Naive thymus-derived CD8-positive, alpha-beta T cell (primary cell): ENCODE measurements at regions of chr14 and their contacts with region 1.

Region 1: DNA sequence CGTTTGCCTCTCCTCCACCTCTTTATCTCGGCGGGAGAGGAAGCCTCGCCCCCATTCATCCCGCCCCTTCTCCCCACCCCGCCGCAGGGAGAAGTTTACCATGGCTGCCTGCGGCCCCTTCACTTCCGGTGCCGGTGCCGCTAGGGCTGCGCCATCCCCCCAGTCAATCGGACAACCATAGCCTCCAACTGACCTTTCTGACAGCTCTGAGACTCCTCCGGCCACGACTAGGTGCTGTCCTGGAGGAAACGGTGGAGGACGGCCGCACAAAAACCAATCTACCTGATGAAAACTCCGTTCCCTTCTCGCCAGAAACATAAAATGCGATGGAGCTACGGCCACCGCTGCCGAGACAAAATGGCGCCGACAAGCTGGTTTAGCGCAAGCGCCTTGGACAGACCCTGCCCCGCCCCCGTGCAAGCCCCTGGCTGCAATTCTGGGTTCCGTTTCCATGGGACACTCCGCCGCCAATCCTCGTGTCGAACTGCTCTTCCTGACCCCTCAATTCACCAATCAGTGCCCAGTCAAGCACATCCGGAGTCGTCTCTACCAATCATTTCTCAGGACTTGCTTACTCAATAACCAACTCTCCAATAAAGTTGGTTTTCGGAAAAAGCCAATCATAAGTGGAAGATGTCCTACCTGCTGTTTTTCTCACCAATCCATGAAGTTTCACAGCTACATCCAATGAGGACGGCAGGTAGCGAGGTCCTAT is 436 bp upstream of the ARID4A start:
- DNase-seq: peak; percentile 96 to 100 (median 99)
- ATAC-seq: peak; percentile 83 to 86
- H3K4me3 Mint-ChIP-seq: no peak overlapping the region
- H3K27ac Mint-ChIP-seq: no peak overlapping the region
- H3K4me1 Mint-ChIP-seq: peaks cover 10 to 64% (median 45%) of the 10 kb centered on the region in 4 donors
- H3K27me3 Mint-ChIP-seq: no peaks in the 10 kb centered on the region

Region 2: GRCh38 chr14:58199726-58200479 is 98.0 kb before region 1 on chr14 and contains the start of gene ACTR10:
- POLR2A ChIA-PET with region 1: interaction called, 28 read pairs
- DNase-seq: peak; percentile 74 to 95 (median 88)
- ATAC-seq: peak; percentile 85 to 88
- H3K4me3 Mint-ChIP-seq: peak within 1 kb of the TSS; percentile 93 to 99 (median 96)
- H3K27ac Mint-ChIP-seq: peak within 1 kb of the TSS; percentile 93 to 98 (median 97)
- H3K4me1 Mint-ChIP-seq: peaks cover 13 to 47% (median 32%) of the 10 kb centered on the region in 4 donors
- H3K27me3 Mint-ChIP-seq: peaks cover 0 to under 1% (median 0%) of the 10 kb centered on the region in 5 donors
- polyA plus RNA-seq, gene ACTR10: 80.3 to 87.2 (median 84.7) TPM

Region 3: DNA sequence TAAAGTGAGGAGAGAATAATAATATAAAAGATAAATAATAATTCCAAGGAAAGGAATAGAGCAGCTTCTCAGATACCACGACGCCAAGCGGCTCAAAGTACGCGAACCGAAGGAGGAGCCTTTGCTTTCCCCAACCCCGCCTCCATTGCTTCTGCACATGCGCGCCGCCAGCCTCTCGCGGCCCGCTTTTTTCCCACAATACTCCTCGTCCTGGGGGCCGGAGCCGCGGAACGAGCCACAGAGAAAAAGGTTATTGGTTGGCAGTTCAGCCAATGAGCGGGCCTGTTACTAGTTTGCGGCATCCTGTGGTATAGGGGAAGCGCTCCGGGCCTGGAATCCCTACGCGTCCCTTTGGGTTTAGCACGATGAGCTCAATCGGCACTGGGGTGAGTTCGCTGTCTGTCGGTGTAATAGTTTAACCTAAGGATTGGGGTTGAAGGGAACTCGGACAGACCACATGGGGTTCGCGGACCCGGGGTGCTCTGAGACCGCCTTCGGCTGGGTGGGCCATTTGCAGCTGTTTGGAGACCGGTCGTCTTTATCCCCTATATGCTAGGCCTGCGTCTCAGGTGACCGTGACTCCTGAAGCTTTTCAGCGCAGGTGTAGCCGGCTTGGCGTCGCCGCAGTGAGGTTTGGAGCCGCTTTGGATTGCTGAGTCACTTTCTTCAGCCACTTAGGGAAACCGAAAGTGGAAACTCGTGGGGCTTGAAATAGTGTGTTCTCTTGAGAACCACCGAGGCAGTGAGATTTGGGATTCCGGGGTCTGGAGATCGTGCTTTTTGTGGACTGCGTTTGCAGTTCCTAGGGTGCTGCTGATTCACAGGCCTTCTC is 53.1 kb before region 1 on chr14 and contains the start of gene PSMA3:
- POLR2A ChIA-PET with region 1: interaction called, 51 read pairs
- DNase-seq: peak; percentile 93 to 99 (median 98)
- ATAC-seq: peak; percentile 91
- H3K4me3 Mint-ChIP-seq: peak within 1 kb of the TSS; percentile 93 to 100 (median 98)
- H3K27ac Mint-ChIP-seq: peak within 1 kb of the TSS; percentile 97 to 99 (median 98)
- H3K4me1 Mint-ChIP-seq: peaks cover 22 to 52% (median 51%) of the 10 kb centered on the region in 4 donors
- H3K27me3 Mint-ChIP-seq: peaks cover 0 to 1% (median 0%) of the 10 kb centered on the region in 5 donors
- polyA plus RNA-seq, gene PSMA3: 135 to 144 (median 142) TPM

Region 4: DNA sequence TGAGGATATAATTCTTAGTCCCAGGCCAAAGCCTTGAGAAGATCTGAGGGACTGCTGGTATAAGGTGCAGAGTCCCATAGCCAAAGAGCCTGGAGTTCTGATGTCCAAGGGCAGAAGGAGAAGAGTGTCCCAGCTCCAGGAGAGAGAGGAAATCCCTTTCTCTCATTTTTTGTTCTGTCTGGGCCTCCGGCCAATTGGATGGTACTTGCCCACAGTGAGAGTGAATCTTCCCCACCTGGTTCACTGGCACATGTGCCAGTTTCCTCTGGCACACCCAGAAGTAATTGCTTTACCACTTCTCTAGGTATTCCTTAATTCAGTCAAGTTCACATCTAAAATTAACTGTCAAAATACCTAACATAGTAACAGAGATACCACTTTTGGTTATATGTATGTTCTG is 15.8 kb after region 1 on chr14:
- POLR2A ChIA-PET with region 1: interaction called, 15 read pairs
- DNase-seq: no peak
- ATAC-seq: no peak
- H3K4me3 Mint-ChIP-seq: no peak overlapping the region
- H3K27ac Mint-ChIP-seq: peak overlapping the region in 7 of 10 donors; percentile 25 to 71 (median 35)
- H3K4me1 Mint-ChIP-seq: peaks cover 7 to 15% (median 9%) of the 10 kb centered on the region in 4 donors
- H3K27me3 Mint-ChIP-seq: no peaks in the 10 kb centered on the region

Region 5: GRCh38 chr14:58395812-58396788 is 98.2 kb after region 1 on chr14 and contains the start of gene TOMM20L:
- POLR2A ChIA-PET with region 1: interaction called, 16 read pairs
- DNase-seq: peak; percentile 50 to 82 (median 73)
- ATAC-seq: peak; percentile 82 to 88
- H3K4me3 Mint-ChIP-seq: peak within 1 kb of the TSS; percentile 78 to 94 (median 86)
- H3K27ac Mint-ChIP-seq: peak within 1 kb of the TSS; percentile 92 to 98 (median 95)
- H3K4me1 Mint-ChIP-seq: peaks cover 7 to 20% (median 12%) of the 10 kb centered on the region in 4 donors
- H3K27me3 Mint-ChIP-seq: no peaks in the 10 kb centered on the region
- polyA plus RNA-seq, gene TOMM20L: not detected